Left colon (tissue), 2 donors: ENCODE measurements at regions of chr12 and their contacts with region 1.

Region 1: DNA sequence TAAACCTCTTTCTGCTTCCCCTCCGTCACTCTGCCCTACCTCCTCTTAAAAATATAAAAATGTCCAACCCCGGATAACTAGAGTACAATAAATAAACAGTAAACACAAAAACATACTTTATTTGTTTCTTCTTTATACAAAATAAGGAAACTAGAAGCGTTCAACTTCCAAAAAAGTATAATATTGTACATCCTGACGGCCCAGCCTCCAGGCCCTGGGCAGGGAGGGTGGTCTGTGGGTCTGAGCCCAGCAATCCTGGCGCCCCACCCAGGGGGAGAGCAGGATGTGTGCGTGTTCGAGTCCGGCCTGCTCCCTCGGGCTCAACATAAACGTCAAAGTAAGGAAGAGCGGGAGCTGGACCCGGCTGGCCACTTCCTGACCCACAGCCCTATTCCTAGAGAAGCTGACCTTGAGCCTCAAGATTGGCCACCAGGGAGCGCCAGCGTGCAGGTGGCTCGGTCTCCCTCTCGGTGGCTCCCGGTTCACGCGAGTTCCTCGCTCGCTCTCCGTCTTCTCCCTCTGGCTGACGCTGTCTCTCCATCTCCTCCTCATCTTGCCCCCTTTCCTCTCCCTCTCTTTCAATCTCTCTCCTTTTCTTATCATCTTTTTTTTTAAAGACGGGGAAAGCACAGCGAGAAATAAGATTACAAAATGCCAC is 9.4 kb downstream of the LHX5 start:
- DNase-seq: peak; percentile 50 to 86
- ATAC-seq: peak; percentile 95

Region 2: DNA sequence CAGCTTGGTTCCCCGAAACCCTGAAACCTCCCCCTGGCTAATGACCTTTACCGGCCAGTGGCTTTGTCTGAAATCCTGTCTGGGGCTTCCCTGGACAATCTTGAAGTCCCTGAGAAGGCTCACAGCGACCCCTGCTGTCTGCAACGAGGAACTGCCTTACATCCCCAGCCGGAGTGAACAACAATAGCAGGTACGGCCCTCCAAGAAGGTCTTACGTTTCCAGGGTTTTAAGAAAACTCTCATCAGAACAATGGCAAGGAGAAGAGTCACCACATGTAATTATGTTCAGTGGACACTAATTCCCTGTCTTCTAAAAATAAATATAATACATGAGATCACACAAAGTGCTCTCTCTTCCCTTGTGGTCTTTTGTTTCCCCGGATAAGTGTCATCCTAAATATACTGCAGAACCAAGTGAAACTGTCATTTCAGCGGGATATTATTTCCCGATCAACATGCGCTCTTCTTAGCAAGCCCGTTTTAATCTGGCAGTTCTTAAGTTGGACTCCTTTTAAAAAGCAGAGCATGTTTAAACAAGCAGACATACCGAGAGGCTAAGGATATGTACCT is 450.6 kb after region 1 on chr12:
- intact Hi-C with region 1: loop called in 1 of 2 experiments (anchors 5 kb)
- DNase-seq: peak in 1 of 2 donors; percentile 54
- ATAC-seq: peak; percentile 59